ENCODE measurements at regions of chr12 and their contacts with region 1.

Region 1: GRCh38 chr12:9851927-9852326 is 17.2 kb downstream of the CLEC2B start:
- DNase-seq: no peak
- H3K4me3 ChIP-seq: no peak overlapping the region
- H3K27ac ChIP-seq: no peak overlapping the region
- H3K4me1 ChIP-seq: no peaks in the 10 kb centered on the region
- H3K27me3 ChIP-seq: peaks cover 4% of the 10 kb centered on the region
- CTCF ChIP-seq: no peak

Region 2: GRCh38 chr12:9742661-9743060 is 109.3 kb before region 1 on chr12:
- CTCF ChIA-PET with region 1: no interaction called
- dilution Hi-C with region 1: loop called (anchors 5 kb)
- in situ Hi-C with region 1: no loop called
- intact Hi-C with region 1: no loop called
- DNase-seq: no peak
- H3K4me3 ChIP-seq: no peak overlapping the region
- H3K27ac ChIP-seq: no peak overlapping the region
- H3K4me1 ChIP-seq: no peaks in the 10 kb centered on the region
- H3K27me3 ChIP-seq: no peaks in the 10 kb centered on the region
- CTCF ChIP-seq: no peak

Region 3: GRCh38 chr12:9919443-9919842 is 67.5 kb after region 1 on chr12:
- CTCF ChIA-PET with region 1: no interaction called
- dilution Hi-C with region 1: no loop called
- in situ Hi-C with region 1: no loop called
- intact Hi-C with region 1: loop called (anchors 5 kb)
- DNase-seq: no peak
- H3K4me3 ChIP-seq: no peak overlapping the region
- H3K27ac ChIP-seq: no peak overlapping the region
- H3K4me1 ChIP-seq: no peaks in the 10 kb centered on the region
- H3K27me3 ChIP-seq: no peaks in the 10 kb centered on the region
- CTCF ChIP-seq: no peak

Measured in mammary epithelial cell (primary cell).